Heart left ventricle (tissue), 16 donors: ENCODE measurements at regions of chr19 and their contacts with region 1.

Region 1: DNA sequence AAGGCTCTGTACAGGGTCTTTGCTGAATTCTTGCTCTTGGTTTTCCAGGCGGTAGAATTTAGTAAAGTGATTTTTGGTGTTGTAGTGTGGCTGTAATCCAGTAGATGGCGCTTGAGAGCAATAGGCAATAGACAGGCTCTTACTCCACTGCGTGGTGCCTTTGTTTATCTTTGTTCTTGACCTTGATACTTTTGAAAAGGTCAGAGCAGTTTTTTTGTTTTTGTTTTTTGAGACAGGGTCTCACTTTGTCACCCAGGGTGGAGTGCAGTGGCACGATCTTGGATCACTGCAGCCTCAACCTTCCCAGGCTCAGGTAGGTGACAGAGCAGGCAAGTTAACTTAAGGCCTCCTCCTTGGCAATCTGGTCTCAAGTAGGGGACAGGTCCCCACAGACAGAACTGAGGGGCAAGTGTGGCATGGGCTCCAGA is 12.2 kb upstream of the LILRA5 start:
- DNase-seq: no peak
- ATAC-seq: peak in 2 of 4 donors; percentile 36 to 61
- H3K4me3 ChIP-seq: no peak overlapping the region
- H3K27ac ChIP-seq: no peak overlapping the region
- H3K4me1 ChIP-seq: peaks cover 0 to 9% (median 0%) of the 10 kb centered on the region in 12 donors
- H3K27me3 ChIP-seq: peaks cover 0 to 39% (median 5%) of the 10 kb centered on the region in 9 donors
- CTCF ChIP-seq: peak; percentile 61 to 83 (median 75)
- POLR2A ChIP-seq: no peak

Region 2: GRCh38 chr19:54266133-54266532 is 59.1 kb before region 1 on chr19:
- intact Hi-C with region 1: no loop called
- DNase-seq: peak in 4 of 5 donors; percentile 48 to 76 (median 65)
- ATAC-seq: peak in 2 of 4 donors; percentile 55 to 57
- H3K4me3 ChIP-seq: no peak overlapping the region
- H3K27ac ChIP-seq: no peak overlapping the region
- H3K4me1 ChIP-seq: no peaks in the 10 kb centered on the region
- H3K27me3 ChIP-seq: no peaks in the 10 kb centered on the region
- CTCF ChIP-seq: peak; percentile 51 to 77 (median 69)
- POLR2A ChIP-seq: no peak

Region 3: GRCh38 chr19:54390942-54391577 is 65.9 kb after region 1 on chr19:
- intact Hi-C with region 1: loop called in 7 of 10 experiments (anchors 1 to 10 kb)
- DNase-seq: peak in 2 of 5 donors; percentile 30 to 38
- ATAC-seq: peak in 1 of 4 donors; percentile 18
- H3K4me3 ChIP-seq: no peak overlapping the region
- H3K27ac ChIP-seq: no peak overlapping the region
- H3K4me1 ChIP-seq: peaks cover 0 to 42% (median 2%) of the 10 kb centered on the region in 12 donors
- H3K27me3 ChIP-seq: peaks cover 0 to 74% (median 13%) of the 10 kb centered on the region in 9 donors
- CTCF ChIP-seq: peak; percentile 55 to 81 (median 73)
- POLR2A ChIP-seq: no peak

Region 4: DNA sequence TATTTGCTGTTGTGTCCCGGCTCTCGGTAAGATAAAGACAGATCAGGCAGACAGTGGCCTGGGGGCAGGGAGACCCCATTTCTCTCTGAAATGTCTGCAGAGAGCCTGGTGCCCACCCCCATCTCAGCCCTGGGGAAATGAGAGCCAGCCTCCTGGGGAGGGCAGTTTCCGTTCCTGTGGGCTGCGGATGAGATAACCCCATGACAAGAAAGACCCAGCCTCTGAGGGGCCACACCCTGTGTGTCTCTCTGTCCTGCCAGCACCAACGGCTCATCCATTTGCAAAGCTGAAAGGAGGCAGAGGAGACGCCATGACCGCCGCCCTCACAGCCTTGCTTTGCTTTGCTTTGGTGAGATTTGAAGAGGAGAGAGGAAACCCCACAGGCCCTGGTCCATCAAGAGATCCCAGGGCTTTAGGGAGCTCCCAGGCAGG is 370.9 kb after region 1 on chr19:
- intact Hi-C with region 1: no loop called
- DNase-seq: no peak
- ATAC-seq: no peak
- H3K4me3 ChIP-seq: no peak overlapping the region
- H3K27ac ChIP-seq: no peak overlapping the region
- H3K4me1 ChIP-seq: peaks cover 0 to 8% (median 0%) of the 10 kb centered on the region in 12 donors
- H3K27me3 ChIP-seq: peaks cover 0 to 18% (median 0%) of the 10 kb centered on the region in 9 donors
- CTCF ChIP-seq: no peak
- POLR2A ChIP-seq: no peak